Esophagus squamous epithelium (tissue), 5 donors: ENCODE measurements at regions of chr17 and their contacts with region 1.

Region 1: DNA sequence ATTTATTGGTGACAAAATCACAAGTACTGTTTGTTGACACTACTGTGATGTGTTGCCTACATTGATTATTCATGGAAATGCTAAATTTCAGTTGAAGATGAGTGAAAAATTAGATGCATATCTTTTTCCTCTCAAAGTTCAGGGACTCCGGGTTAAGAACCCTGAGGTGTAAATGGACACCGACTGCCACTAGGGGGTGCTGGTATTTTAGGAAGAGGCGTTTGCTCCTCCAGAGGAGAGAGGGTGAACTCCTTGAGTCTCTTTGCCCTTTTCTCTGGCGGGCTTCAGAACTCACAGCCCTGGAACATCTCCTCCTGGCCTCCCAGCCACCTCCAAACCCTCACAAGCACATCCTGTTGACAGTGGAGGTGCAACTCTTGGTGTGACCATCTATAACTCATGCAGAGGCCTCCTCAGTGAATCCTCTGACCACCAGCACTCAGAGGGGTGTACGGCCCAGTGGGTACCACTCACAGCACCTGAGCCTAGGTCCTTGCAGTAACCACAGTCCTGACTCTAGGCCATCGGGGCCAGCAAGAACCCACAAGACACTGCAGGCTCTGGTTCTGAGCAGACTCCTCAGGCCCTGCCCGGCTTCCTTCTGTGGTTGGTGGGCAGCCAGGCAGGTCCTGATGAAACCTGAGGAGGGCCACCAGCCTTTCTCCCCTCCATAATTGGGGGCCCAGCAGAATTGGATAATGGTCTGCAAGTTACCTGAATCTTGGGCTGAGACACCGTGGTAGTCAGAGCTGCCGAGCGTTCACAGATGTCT is 26.2 kb upstream of the PIK3R5 start:
- DNase-seq: no peak
- H3K4me3 ChIP-seq: no peak overlapping the region
- H3K27ac ChIP-seq: no peak overlapping the region
- H3K4me1 ChIP-seq: peaks cover 0 to 5% (median 0%) of the 10 kb centered on the region in 3 donors
- H3K27me3 ChIP-seq: no peaks in the 10 kb centered on the region
- CTCF ChIP-seq: peak; percentile 69 to 87 (median 84)
- POLR2A ChIP-seq: no peak

Region 2: GRCh38 chr17:9090641-9091096 is 99.0 kb after region 1 on chr17:
- intact Hi-C with region 1: no loop called
- DNase-seq: no peak
- H3K4me3 ChIP-seq: no peak overlapping the region
- H3K27ac ChIP-seq: peak overlapping the region in 3 of 4 donors; percentile 60 to 78 (median 69)
- H3K4me1 ChIP-seq: peaks cover 0 to 32% (median 3%) of the 10 kb centered on the region in 3 donors
- H3K27me3 ChIP-seq: no peaks in the 10 kb centered on the region
- CTCF ChIP-seq: no peak
- POLR2A ChIP-seq: no peak

Region 3: DNA sequence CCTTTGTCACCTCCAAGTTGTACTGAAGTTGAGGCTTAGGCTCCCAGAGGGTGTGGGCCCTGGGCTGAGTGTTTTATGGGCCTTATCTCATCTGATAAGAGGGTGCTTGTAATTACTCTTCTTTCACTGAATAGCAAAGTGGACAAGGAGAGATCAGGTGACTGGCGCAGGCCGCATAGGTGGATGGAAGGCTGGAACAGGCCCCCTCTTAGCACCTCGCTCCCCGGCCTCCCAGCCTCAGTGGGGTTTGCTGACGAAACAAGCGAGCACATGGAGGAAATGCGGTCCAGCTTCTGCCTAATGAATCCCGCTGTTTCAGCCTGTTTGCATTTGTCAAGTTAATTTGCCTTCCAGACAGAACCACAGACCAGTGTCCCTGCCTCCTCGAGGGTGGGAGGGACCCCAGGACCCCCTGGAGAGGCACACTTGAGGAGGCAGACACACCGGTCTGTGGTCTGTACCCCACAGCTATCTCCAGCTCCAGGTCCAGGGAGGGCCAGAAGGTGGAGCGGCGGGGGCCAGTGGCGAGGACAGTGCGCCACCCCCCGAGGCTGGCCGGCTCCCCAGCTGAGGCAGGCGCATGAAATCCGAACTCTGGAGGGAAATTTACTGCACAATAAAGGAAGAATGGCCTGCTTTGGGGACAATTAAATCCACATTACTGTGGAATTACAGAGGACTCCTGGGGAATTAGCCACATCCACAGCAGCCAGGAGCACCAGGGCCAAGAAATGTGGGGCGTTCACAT is 153.0 kb after region 1 on chr17:
- intact Hi-C with region 1: no loop called
- DNase-seq: no peak
- H3K4me3 ChIP-seq: no peak overlapping the region
- H3K27ac ChIP-seq: peak overlapping the region in 3 of 4 donors; percentile 17 to 63 (median 26)
- H3K4me1 ChIP-seq: peaks cover 0 to 47% (median 30%) of the 10 kb centered on the region in 3 donors
- H3K27me3 ChIP-seq: no peaks in the 10 kb centered on the region
- CTCF ChIP-seq: no peak
- POLR2A ChIP-seq: no peak

Region 4: GRCh38 chr17:9291912-9292560 is 300.3 kb after region 1 on chr17:
- intact Hi-C with region 1: loop called (anchors 10 kb)
- DNase-seq: no peak
- H3K4me3 ChIP-seq: no peak overlapping the region
- H3K27ac ChIP-seq: peak overlapping the region; percentile 35 to 85 (median 71)
- H3K4me1 ChIP-seq: peaks cover 0 to 47% (median 19%) of the 10 kb centered on the region in 3 donors
- H3K27me3 ChIP-seq: no peaks in the 10 kb centered on the region
- CTCF ChIP-seq: peak; percentile 27 to 79 (median 72)
- POLR2A ChIP-seq: no peak

Region 5: GRCh38 chr17:9522074-9522473 is 530.4 kb after region 1 on chr17:
- intact Hi-C with region 1: loop called (anchors 5 kb)
- DNase-seq: no peak
- H3K4me3 ChIP-seq: no peak overlapping the region
- H3K27ac ChIP-seq: no peak overlapping the region
- H3K4me1 ChIP-seq: no peaks in the 10 kb centered on the region
- H3K27me3 ChIP-seq: no peaks in the 10 kb centered on the region
- CTCF ChIP-seq: peak in 5 of 6 experiments; percentile 30 to 58 (median 43)
- POLR2A ChIP-seq: no peak